GM13977 (cell line): ENCODE measurements at regions of chr11 and their contacts with region 1.

Region 1: DNA sequence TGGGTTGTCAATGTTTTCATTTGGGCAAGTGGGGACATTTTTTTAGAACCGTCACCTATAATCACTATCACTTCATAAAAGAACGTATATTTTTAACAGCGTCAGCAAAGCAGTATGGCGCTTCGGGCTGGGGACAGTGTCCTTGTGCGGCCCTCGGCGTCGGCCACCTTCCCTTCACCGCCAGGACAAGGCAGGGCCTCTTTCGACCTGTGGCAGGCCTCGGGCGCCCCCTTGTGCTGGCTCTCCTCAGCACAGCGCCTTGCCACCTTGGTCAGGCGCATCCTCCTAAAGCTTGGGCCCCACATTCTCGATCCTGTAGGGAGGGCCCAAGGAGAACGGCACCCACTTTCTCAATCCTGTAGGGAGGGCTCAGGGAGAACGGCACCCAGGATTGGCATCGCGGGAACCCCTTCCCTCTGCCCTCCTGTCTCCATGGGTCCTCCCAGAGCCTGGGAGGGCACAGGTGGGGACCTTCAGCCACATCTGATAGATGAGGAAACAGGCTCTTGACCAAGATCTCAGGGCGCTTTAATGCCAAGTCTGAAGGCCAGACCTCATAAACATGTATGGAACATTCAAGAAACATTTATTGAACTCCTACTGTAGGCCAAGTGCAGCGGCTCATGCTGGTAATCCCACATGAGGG is 11.5 kb upstream of the FADD start:
- DNase-seq: peak; percentile 84
- CTCF ChIP-seq: peak; percentile 96

Region 2: GRCh38 chr11:69683764-69684333 is 507.8 kb before region 1 on chr11:
- in situ Hi-C with region 1: loop called (anchors 25 kb)
- DNase-seq: no peak
- CTCF ChIP-seq: peak; percentile 58

Region 3: GRCh38 chr11:69925366-69926196 is 266.0 kb before region 1 on chr11:
- in situ Hi-C with region 1: loop called (anchors 10 kb)
- DNase-seq: no peak
- CTCF ChIP-seq: no peak